Heart right ventricle (tissue), 16 donors: ENCODE measurements at regions of chr1 and their contacts with region 1.

Region 1: GRCh38 chr1:176494436-176494835 is 31.5 kb downstream of the PAPPA2 start:
- DNase-seq: peak; percentile 27 to 59
- ATAC-seq: peak; percentile 34 to 99 (median 96)
- H3K4me3 ChIP-seq: no peak overlapping the region
- H3K27ac ChIP-seq: peak overlapping the region in 5 of 10 donors; percentile 24 to 65 (median 42)
- H3K4me1 ChIP-seq: peaks cover 0 to 7% (median 0%) of the 10 kb centered on the region in 9 donors
- H3K27me3 ChIP-seq: no peaks in the 10 kb centered on the region
- CTCF ChIP-seq: no peak

Region 2: GRCh38 chr1:176364236-176364905 is 130.1 kb before region 1 on chr1:
- intact Hi-C with region 1: no loop called
- DNase-seq: no peak
- ATAC-seq: no peak
- H3K4me3 ChIP-seq: no peak overlapping the region
- H3K27ac ChIP-seq: no peak overlapping the region
- H3K4me1 ChIP-seq: no peaks in the 10 kb centered on the region
- H3K27me3 ChIP-seq: no peaks in the 10 kb centered on the region
- CTCF ChIP-seq: no peak

Region 3: DNA sequence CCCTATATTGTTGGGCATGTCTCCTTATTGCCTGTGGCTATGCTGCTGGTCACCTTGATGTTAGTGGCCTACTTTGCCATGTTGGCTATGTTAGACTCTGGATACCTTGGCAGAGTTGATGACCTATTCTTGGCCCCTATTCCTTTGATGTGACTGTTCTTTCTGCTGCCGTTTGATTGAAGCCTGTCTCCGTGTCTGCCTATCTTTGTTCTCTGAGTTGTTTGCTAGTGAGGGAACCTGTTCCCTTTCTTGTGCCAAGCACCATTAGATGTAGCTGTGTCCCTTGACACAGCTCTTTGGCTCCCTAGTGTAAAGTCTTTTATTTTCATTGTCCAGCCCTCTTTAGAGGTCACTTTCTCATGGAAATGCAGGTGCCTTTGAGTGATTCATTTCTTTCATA is 60.2 kb before region 1 on chr1:
- intact Hi-C with region 1: loop called in 1 of 10 experiments (anchors 10 kb)
- DNase-seq: no peak
- ATAC-seq: peak in 2 of 8 donors; percentile 15 to 82
- H3K4me3 ChIP-seq: no peak overlapping the region
- H3K27ac ChIP-seq: peak overlapping the region in 1 of 10 donors; percentile 7
- H3K4me1 ChIP-seq: peaks cover 0 to 10% (median 0%) of the 10 kb centered on the region in 9 donors
- H3K27me3 ChIP-seq: no peaks in the 10 kb centered on the region
- CTCF ChIP-seq: no peak